CD8-positive, alpha-beta memory T cell (primary cell): ENCODE measurements at regions of chr9 and their contacts with region 1.

Region 1: GRCh38 chr9:134443168-134444037 is 117.1 kb downstream of the RXRA start:
- DNase-seq: peak; percentile 82 to 93 (median 83)
- H3K4me3 ChIP-seq: no peak overlapping the region
- H3K4me3 Mint-ChIP-seq: peak overlapping the region in 2 of 7 donors; percentile 36 to 46
- H3K27ac ChIP-seq: no peak overlapping the region
- H3K27ac Mint-ChIP-seq: peak overlapping the region; percentile 15 to 85 (median 68)
- H3K4me1 ChIP-seq: peaks cover 7% of the 10 kb centered on the region
- H3K4me1 Mint-ChIP-seq: peaks cover 13 to 14% (median 14%) of the 10 kb centered on the region in 3 donors
- H3K27me3 ChIP-seq: peaks cover 5% of the 10 kb centered on the region
- H3K27me3 Mint-ChIP-seq: peaks cover 3 to 7% of the 10 kb centered on the region in 2 donors

Region 2: DNA sequence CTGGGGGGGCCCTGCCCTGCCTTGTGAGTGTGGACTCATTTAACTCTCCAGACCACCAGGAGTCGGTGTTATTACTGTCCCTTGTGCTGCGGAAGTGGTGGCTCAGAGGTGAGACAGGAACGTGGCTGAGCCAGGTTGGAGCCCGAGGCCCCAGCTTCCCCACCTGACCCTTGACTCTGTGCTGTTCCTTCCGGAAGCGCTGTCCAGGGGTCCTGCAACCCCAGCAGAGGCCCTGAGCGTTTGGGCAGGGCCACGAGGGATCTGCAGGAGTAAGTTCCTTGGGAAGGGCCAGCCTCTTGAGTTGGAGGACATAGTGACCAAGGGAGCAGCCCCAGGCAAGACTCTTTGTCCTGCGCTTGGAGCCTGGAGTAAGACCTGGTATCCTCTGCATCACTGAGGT is 17.6 kb before region 1 on chr9:
- CTCF ChIA-PET with region 1: no interaction called
- POLR2A ChIA-PET with region 1: no interaction called
- DNase-seq: no peak
- H3K4me3 ChIP-seq: no peak overlapping the region
- H3K4me3 Mint-ChIP-seq: no peak overlapping the region
- H3K27ac ChIP-seq: no peak overlapping the region
- H3K27ac Mint-ChIP-seq: no peak overlapping the region
- H3K4me1 ChIP-seq: no peaks in the 10 kb centered on the region
- H3K4me1 Mint-ChIP-seq: no peaks in the 10 kb centered on the region
- H3K27me3 ChIP-seq: no peaks in the 10 kb centered on the region
- H3K27me3 Mint-ChIP-seq: no peaks in the 10 kb centered on the region

Region 3: DNA sequence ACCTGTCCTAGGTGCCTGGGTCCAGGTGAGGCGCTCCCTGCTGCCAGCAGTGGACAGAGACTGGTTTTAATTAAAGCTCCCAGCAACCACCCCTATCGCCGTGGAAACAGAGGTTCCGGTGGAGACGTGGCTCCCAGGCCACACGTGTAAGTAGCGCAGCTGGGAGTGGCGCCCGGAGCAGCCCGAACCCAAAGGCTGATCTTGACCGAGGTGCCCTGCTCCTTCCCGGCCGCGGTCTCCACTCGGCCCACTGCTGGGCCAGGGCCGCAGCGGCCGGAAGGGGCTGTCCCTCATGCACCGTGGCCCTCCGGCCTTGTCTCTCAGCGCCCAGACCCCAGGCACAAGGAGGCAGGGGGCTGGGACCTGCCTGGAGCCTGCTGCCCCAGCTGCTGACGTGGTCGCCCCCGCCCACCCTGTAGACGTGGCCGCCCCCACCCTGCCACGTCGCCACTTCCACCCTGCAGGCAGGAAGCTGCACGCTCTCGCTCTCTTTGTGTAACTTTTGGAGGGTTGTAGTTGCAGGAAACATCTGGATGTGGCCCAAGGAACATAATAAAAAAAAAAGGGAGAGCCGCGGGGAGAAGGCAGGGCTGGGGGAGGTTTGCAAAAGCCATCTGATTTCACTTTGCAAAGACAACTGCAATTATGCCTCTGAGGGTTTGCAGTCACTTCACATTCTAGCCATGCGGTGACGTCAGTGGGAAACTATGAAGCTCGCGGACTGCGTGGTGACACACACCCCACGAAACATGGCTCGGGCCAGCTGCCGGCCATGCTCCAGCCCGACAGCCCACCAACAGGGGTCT is 12.7 kb after region 1 on chr9:
- CTCF ChIA-PET with region 1: interaction called, 11 read pairs
- POLR2A ChIA-PET with region 1: interaction called, 3 read pairs
- DNase-seq: peak; percentile 57 to 85 (median 80)
- H3K4me3 ChIP-seq: peak overlapping the region; percentile 67
- H3K4me3 Mint-ChIP-seq: peak overlapping the region; percentile 66 to 94 (median 85)
- H3K27ac ChIP-seq: peak overlapping the region; percentile 49
- H3K27ac Mint-ChIP-seq: peak overlapping the region; percentile 71 to 98 (median 96)
- H3K4me1 ChIP-seq: peaks cover 20% of the 10 kb centered on the region
- H3K4me1 Mint-ChIP-seq: peaks cover 7 to 12% (median 8%) of the 10 kb centered on the region in 3 donors
- H3K27me3 ChIP-seq: no peaks in the 10 kb centered on the region
- H3K27me3 Mint-ChIP-seq: no peaks in the 10 kb centered on the region